Right ventricle myocardium superior (tissue), 1 donor: ENCODE measurements at regions of chr6 and their contacts with region 1.

Region 1: GRCh38 chr6:129598244-129599187 is 111.5 kb downstream of the ARHGAP18 start:
- DNase-seq: no peak
- ATAC-seq: peak; percentile 84

Region 2: GRCh38 chr6:129567374-129567773 is 31.1 kb before region 1 on chr6:
- intact Hi-C with region 1: no loop called
- DNase-seq: no peak
- ATAC-seq: no peak

Region 3: DNA sequence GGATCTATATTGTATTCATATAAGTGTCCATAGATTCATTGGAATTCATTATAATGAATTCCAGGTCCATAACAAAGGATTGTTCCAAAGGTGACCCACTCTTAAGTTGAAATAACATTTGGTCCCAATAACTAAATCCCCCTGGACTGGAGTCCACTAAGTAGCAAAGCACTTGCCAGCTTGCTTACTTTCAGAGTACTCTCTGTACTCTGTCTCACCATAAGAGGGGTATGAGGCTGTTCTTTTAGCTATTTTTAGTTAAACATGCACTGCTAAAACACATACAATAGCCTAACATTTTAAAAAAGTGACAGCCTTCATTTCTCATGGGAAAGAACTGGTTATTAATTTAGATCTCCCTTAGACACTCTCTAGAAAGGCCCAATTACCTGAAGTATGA is 128.1 kb after region 1 on chr6:
- intact Hi-C with region 1: loop called (anchors 5 kb)
- DNase-seq: no peak
- ATAC-seq: peak; percentile 54

Region 4: GRCh38 chr6:129749749-129750120 is 151.2 kb after region 1 on chr6:
- intact Hi-C with region 1: loop called (anchors 2 kb)
- DNase-seq: no peak
- ATAC-seq: peak; percentile 75